Endothelial cell of umbilical vein (primary cell): ENCODE measurements at regions of chr10 and their contacts with region 1.

Region 1: GRCh38 chr10:92712016-92712889 is 22.5 kb downstream of the HHEX start:
- DNase-seq: peak; percentile 10
- H3K4me3 ChIP-seq: no peak overlapping the region
- H3K27ac ChIP-seq: no peak overlapping the region
- H3K4me1 ChIP-seq: no peaks in the 10 kb centered on the region
- H3K27me3 ChIP-seq: no peaks in the 10 kb centered on the region
- CTCF ChIP-seq: no peak
- POLR2A ChIP-seq: no peak

Region 2: GRCh38 chr10:92395271-92395670 is 317.0 kb before region 1 on chr10:
- CTCF ChIA-PET with region 1: no interaction called
- POLR2A ChIA-PET with region 1: no interaction called
- dilution Hi-C with region 1: no loop called
- intact Hi-C with region 1: no loop called
- DNase-seq: no peak
- H3K4me3 ChIP-seq: no peak overlapping the region
- H3K27ac ChIP-seq: no peak overlapping the region
- H3K4me1 ChIP-seq: no peaks in the 10 kb centered on the region
- H3K27me3 ChIP-seq: no peaks in the 10 kb centered on the region
- CTCF ChIP-seq: no peak
- POLR2A ChIP-seq: no peak

Region 3: GRCh38 chr10:92727550-92727949 is 15.3 kb after region 1 on chr10:
- CTCF ChIA-PET with region 1: interaction called, 12 read pairs
- POLR2A ChIA-PET with region 1: no interaction called
- dilution Hi-C with region 1: no loop called
- intact Hi-C with region 1: no loop called
- DNase-seq: peak; percentile 5
- H3K4me3 ChIP-seq: no peak overlapping the region
- H3K27ac ChIP-seq: no peak overlapping the region
- H3K4me1 ChIP-seq: no peaks in the 10 kb centered on the region
- H3K27me3 ChIP-seq: peaks cover 0 to 1% of the 10 kb centered on the region in 2 experiments
- CTCF ChIP-seq: no peak
- POLR2A ChIP-seq: no peak